ENCODE measurements at regions of chr9 and their contacts with region 1.

Region 1: GRCh38 chr9:125758986-125759763 is 12.0 kb downstream of the PBX3 start:
- DNase-seq: no peak
- H3K4me3 ChIP-seq: peak overlapping the region in 1 of 2 donors; percentile 9
- H3K27ac ChIP-seq: no peak overlapping the region
- H3K4me1 ChIP-seq: peaks cover 7% of the 10 kb centered on the region
- H3K27me3 ChIP-seq: no peaks in the 10 kb centered on the region
- CTCF ChIP-seq: no peak
- POLR2A ChIP-seq: no peak

Region 2: GRCh38 chr9:125472926-125473701 is 286.1 kb before region 1 on chr9:
- intact Hi-C with region 1: loop called (anchors 10 kb)
- DNase-seq: no peak
- H3K4me3 ChIP-seq: no peak overlapping the region
- H3K27ac ChIP-seq: peak overlapping the region; percentile 20 to 29
- H3K4me1 ChIP-seq: peaks cover 4% of the 10 kb centered on the region
- H3K27me3 ChIP-seq: no peaks in the 10 kb centered on the region
- CTCF ChIP-seq: no peak
- POLR2A ChIP-seq: no peak

Region 3: GRCh38 chr9:125608489-125609224 is 150.5 kb before region 1 on chr9:
- intact Hi-C with region 1: no loop called
- DNase-seq: no peak
- H3K4me3 ChIP-seq: no peak overlapping the region
- H3K27ac ChIP-seq: no peak overlapping the region
- H3K4me1 ChIP-seq: no peaks in the 10 kb centered on the region
- H3K27me3 ChIP-seq: no peaks in the 10 kb centered on the region
- CTCF ChIP-seq: no peak
- POLR2A ChIP-seq: no peak

Region 4: DNA sequence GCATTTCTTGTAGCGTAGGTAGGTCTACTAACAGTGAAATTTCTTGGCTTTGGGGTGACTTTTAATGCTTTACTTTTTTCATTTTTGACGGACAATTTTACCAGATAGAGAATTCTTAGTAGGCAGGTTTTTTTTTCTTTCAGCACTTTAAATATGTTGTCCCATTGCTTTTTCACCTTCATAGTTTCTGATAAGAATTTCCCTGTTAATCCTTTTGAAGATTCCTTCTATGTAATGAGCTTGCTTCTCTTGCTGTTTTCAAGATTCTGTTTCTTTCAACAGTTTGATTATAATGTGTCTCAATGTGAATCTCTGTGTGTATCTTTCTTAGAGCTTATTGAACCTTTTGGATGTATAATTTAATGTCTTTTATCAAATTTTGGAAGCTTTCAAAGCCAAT is 23.5 kb after region 1 on chr9:
- intact Hi-C with region 1: no loop called
- DNase-seq: no peak
- H3K4me3 ChIP-seq: no peak overlapping the region
- H3K27ac ChIP-seq: no peak overlapping the region
- H3K4me1 ChIP-seq: no peaks in the 10 kb centered on the region
- H3K27me3 ChIP-seq: no peaks in the 10 kb centered on the region
- CTCF ChIP-seq: no peak
- POLR2A ChIP-seq: no peak

Measured in prostate gland (tissue), 2 donors.